Mammary epithelial cell (primary cell): ENCODE measurements at regions of chr15 and their contacts with region 1.

Region 1: GRCh38 chr15:52256366-52256765 is 39.2 kb downstream of the MYO5C start:
- DNase-seq: peak; percentile 65
- H3K4me3 ChIP-seq: no peak overlapping the region
- H3K27ac ChIP-seq: no peak overlapping the region
- H3K4me1 ChIP-seq: peaks cover 32% of the 10 kb centered on the region
- H3K27me3 ChIP-seq: no peaks in the 10 kb centered on the region
- CTCF ChIP-seq: peak; percentile 74 to 76

Region 2: DNA sequence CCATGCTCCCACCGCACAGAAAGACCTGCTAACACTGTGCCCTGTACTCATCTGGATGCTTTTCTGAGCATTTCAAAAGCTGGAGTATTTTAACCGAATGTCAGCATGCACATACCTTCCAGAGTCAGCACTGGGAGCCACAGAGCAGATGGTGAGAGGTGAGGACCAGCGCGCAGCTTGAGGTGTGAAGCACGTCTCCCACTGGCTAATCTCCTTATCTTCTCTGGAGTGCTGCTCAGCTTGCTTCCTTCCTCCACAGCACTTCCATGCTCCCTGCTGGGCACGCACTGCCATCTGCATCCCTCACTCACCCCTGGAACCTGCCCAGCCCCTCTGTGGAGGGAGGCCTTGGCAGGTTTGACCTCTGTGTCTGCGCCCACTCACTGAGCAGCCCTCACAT is 65.2 kb before region 1 on chr15 and contains the start of gene GNB5:
- CTCF ChIA-PET with region 1: no interaction called
- dilution Hi-C with region 1: no loop called
- in situ Hi-C with region 1: no loop called
- intact Hi-C with region 1: no loop called
- DNase-seq: no peak
- H3K4me3 ChIP-seq: no peak within 1 kb of the TSS
- H3K27ac ChIP-seq: no peak within 1 kb of the TSS
- H3K4me1 ChIP-seq: no peaks in the 10 kb centered on the region
- H3K27me3 ChIP-seq: no peaks in the 10 kb centered on the region
- CTCF ChIP-seq: no peak
- total RNA-seq, gene GNB5: 35.5 to 38.3 TPM

Region 3: GRCh38 chr15:52331490-52332240 is 75.3 kb after region 1 on chr15:
- CTCF ChIA-PET with region 1: no interaction called
- dilution Hi-C with region 1: no loop called
- in situ Hi-C with region 1: no loop called
- intact Hi-C with region 1: loop called (anchors 1 kb)
- DNase-seq: peak; percentile 75
- H3K4me3 ChIP-seq: no peak overlapping the region
- H3K27ac ChIP-seq: no peak overlapping the region
- H3K4me1 ChIP-seq: peaks cover 25% of the 10 kb centered on the region
- H3K27me3 ChIP-seq: no peaks in the 10 kb centered on the region
- CTCF ChIP-seq: peak; percentile 65 to 66

Region 4: DNA sequence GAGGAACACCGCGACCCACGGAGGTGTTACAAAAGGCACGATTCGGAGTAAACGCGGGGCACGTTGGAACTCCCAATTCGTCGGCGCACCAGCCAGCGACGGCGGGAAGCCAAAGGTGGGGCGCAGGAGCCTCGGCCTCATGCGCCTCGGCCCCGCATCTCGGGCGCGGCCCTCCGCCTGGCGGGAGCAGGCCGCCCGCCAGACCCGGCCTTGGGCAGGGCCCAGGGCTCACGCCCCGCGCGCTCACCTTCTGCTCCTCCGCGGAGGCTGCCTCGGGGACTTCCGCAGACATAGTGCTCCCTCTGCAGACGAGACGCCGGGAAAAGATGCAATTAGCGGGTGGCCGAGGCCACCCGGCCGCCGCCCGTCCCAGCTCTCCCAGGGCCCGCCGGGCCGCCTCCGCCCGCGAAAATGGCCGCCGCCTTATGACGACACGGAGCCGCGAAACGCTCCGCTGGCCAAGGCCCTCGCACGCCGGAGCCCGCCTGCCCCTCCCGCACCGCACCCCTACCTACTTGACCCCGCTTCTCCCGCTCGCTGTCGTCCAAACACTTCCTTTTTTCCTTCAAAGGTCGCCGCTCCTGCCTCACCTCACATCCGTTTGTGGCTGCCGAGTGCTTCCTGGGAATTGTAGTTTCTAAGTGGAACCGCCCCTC is 312.4 kb after region 1 on chr15 and contains the start of gene ARPP19:
- CTCF ChIA-PET with region 1: no interaction called
- dilution Hi-C with region 1: no loop called
- in situ Hi-C with region 1: no loop called
- intact Hi-C with region 1: loop called (anchors 5 kb)
- DNase-seq: peak; percentile 93
- H3K4me3 ChIP-seq: peak within 1 kb of the TSS; percentile 71 to 76 (median 74)
- H3K27ac ChIP-seq: peak within 1 kb of the TSS; percentile 93
- H3K4me1 ChIP-seq: peaks cover 5% of the 10 kb centered on the region
- H3K27me3 ChIP-seq: no peaks in the 10 kb centered on the region
- CTCF ChIP-seq: peak in 1 of 2 donors; percentile 31
- total RNA-seq, gene ARPP19: 153 to 200 TPM

Region 5: DNA sequence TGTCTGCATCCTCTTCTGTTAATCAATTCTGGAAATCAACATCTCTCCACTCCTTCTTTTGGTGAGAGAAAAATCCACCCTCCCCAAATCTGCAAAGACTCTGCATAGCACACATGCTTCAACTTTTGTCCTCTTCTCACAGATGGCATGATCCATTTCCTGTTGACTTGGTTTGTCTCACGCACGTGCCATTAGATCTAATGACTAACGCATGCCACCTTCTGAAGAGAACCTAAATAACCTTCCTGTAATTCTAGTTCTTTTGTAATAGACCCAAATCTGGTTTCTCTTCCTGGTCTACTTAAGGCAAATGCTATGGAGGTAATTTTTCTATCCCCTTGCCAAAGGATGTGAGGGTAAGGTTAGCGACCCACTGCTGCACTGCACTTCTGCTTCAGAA is 473.8 kb after region 1 on chr15:
- CTCF ChIA-PET with region 1: no interaction called
- dilution Hi-C with region 1: loop called (anchors 5 kb)
- in situ Hi-C with region 1: loop called (anchors 5 to 10 kb)
- intact Hi-C with region 1: loop called (anchors 1 kb)
- DNase-seq: peak; percentile 22
- H3K4me3 ChIP-seq: no peak overlapping the region
- H3K27ac ChIP-seq: no peak overlapping the region
- H3K4me1 ChIP-seq: peaks cover 19% of the 10 kb centered on the region
- H3K27me3 ChIP-seq: no peaks in the 10 kb centered on the region
- CTCF ChIP-seq: no peak

Region 6: GRCh38 chr15:53197426-53197839 is 941.1 kb after region 1 on chr15:
- CTCF ChIA-PET with region 1: no interaction called
- dilution Hi-C with region 1: no loop called
- in situ Hi-C with region 1: no loop called
- intact Hi-C with region 1: loop called (anchors 10 kb)
- DNase-seq: peak; percentile 46
- H3K4me3 ChIP-seq: no peak overlapping the region
- H3K27ac ChIP-seq: no peak overlapping the region
- H3K4me1 ChIP-seq: no peaks in the 10 kb centered on the region
- H3K27me3 ChIP-seq: no peaks in the 10 kb centered on the region
- CTCF ChIP-seq: peak; percentile 60 to 95